GM10248 (cell line): ENCODE measurements at regions of chr5 and their contacts with region 1.

Region 1: GRCh38 chr5:133321833-133322420 is 270.1 kb downstream of the HSPA4 start:
- DNase-seq: peak; percentile 67
- CTCF ChIP-seq: no peak

Region 2: GRCh38 chr5:133309166-133309795 is 12.6 kb before region 1 on chr5:
- CTCF ChIA-PET with region 1: interaction called, 20 read pairs
- POLR2A ChIA-PET with region 1: no interaction called
- DNase-seq: no peak
- CTCF ChIP-seq: no peak